ENCODE measurements at regions of chr11 and their contacts with region 1.

Region 1: GRCh38 chr11:83249972-83250593 is 36.1 kb downstream of the CCDC90B start:
- DNase-seq: no peak
- ATAC-seq: peak; percentile 45

Region 2: DNA sequence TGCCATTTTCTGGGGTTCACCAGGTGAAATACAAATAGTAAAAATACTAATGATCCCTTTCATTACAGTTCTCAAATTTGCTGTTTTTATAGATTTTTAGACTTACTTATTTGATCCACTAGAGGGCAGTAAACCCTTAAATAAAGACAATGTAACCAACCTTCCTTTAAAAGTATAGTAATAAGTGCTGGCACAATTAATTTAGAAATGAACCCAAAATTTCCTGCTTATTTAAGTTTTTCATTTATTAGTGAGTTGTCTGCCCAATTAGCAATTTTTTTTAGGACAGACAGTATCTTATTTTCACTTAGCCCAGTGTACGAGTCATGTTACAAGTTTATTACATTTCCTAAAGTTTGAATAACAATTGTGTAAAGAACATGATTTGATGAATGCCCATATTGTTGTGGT is 343.8 kb before region 1 on chr11:
- intact Hi-C with region 1: loop called (anchors 5 kb)
- DNase-seq: no peak
- ATAC-seq: no peak

Region 3: GRCh38 chr11:83193315-83194280 is 56.5 kb before region 1 on chr11 and contains the start of gene ANKRD42:
- intact Hi-C with region 1: no loop called
- DNase-seq: peak; percentile 92
- ATAC-seq: peak; percentile 98
- total RNA-seq, gene ANKRD42: 4.3 TPM

Region 4: GRCh38 chr11:83410605-83411565 is 160.8 kb after region 1 on chr11:
- intact Hi-C with region 1: no loop called
- DNase-seq: no peak
- ATAC-seq: peak; percentile 83

Measured in left ventricle myocardium superior (tissue), 1 donor.